Right ventricle myocardium inferior (tissue), 1 donor: ENCODE measurements at regions of chr22 and their contacts with region 1.

Region 1: DNA sequence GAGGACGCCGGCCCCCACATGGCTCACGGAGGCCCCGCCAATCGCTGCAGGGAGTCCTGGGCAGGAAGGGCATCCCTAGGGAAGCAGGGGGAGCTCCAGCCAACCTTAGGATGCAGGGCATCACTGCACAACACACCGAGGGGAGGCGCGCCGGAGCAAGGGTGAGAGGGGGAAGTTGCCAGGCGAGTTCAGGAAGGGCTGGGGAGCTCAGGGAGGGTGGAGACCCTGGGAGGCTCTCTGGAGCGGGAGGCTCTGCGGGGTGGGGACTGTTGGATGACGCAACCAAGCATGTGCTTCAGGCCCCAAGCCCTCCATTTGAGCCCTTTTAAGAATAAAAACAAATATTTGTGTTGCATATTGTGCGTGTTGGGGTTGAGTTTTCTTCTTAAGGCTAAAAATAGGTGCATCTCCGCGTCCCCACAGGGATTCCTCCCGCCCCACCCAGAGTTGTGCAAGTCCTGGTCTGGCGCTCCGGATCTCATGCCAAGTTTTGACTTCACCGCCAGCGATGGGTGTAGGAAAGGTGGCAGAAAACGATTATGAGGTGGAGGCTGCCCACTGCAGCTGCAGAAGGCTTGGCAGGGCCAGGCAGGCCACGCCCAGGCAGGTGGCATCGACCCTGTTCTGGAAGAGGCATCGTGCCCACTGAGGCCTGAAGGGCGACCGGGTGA is 65.2 kb downstream of the WNT7B start:
- DNase-seq: peak; percentile 77
- ATAC-seq: peak; percentile 63

Region 2: GRCh38 chr22:45842291-45842991 is 69.3 kb before region 1 on chr22:
- intact Hi-C with region 1: no loop called
- DNase-seq: no peak
- ATAC-seq: no peak

Region 3: DNA sequence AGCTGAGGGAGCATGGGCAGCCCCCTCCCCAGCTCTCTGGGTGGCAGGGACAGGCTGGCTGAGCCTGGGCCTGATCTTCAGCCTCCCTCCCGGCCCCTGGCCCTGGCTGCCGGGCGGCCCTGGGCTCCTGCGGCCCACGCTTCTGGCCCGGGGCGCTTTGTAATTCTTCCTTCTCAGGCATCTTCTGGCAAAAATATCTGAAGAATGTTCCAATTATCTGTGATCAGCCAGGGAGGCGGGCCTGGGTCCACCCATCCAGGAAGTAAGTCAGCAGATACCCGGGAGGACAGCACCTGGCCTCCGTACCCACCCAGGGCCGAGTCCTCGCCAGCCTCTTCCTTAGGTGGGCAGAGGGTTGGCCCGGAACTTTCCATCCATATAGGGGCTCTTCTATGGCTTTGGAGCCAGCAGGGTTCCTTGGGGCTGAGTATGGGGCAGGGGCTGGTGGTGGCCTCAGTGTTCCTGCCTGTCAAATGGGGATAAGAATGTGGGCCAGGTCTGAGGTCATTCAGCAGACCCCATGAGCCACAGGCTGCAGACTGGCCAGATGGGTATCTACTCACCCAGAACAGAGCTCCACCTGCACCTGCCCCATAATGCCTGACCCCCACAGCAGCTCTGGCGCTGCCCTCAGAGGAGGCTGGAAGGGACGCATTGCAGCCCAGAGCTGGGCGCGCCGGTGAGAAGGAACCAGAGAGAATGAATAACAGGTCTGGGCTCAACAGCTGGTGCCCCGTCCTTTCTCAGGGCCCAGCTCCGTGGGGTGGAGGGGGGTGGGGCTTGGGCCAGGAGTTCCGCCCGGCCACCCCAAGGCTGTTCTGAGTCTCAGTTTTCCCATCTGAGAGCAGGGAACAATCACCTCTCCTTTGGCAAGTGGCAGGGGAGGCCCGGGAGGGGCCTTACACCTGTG is 49.0 kb after region 1 on chr22:
- intact Hi-C with region 1: loop called (anchors 5 kb)
- DNase-seq: no peak
- ATAC-seq: no peak